ENCODE measurements at regions of chr10 and their contacts with region 1.

Region 1: DNA sequence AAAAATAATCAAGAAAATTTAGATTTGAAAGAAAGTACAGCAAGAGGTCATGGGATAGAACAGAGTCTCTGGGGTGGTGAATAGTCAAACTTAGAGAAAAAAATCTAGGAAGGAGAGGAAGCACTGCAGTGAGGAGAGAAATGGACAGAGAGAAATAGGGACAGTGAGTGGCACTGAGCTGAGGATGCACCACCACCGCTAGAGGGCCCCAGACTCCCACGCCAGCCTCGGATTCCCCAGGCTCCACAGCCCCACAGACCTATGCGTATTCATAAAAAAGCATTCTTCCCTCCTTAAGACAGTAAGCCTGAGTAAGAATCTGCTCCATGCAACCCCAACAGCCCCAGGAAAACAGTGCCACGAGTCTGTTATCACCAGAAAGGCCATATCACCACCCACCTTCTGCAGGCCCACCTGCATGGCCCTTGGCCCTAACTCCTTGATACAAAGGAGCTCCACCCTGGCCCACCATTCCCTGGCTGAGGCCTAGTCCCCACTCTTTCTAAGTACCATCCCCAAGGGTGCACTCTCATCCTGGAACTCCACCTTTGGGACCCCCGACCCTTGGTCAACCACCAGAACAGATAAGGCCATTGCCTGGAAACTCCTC is 91.0 kb downstream of the ALOX5 start:
- DNase-seq: peak; percentile 63
- H3K4me3 Mint-ChIP-seq: no peak overlapping the region
- H3K27ac Mint-ChIP-seq: no peak overlapping the region
- H3K4me1 Mint-ChIP-seq: peaks cover 55% of the 10 kb centered on the region
- H3K27me3 Mint-ChIP-seq: no peaks in the 10 kb centered on the region

Region 2: GRCh38 chr10:45052700-45053099 is 412.4 kb before region 1 on chr10:
- intact Hi-C with region 1: no loop called
- DNase-seq: no peak
- H3K4me3 Mint-ChIP-seq: no peak overlapping the region
- H3K27ac Mint-ChIP-seq: no peak overlapping the region
- H3K4me1 Mint-ChIP-seq: no peaks in the 10 kb centered on the region
- H3K27me3 Mint-ChIP-seq: peaks cover 8% of the 10 kb centered on the region

Region 3: GRCh38 chr10:45235798-45236231 is 229.2 kb before region 1 on chr10:
- intact Hi-C with region 1: loop called (anchors 1 kb)
- DNase-seq: no peak
- H3K4me3 Mint-ChIP-seq: no peak overlapping the region
- H3K27ac Mint-ChIP-seq: no peak overlapping the region
- H3K4me1 Mint-ChIP-seq: peaks cover 14% of the 10 kb centered on the region
- H3K27me3 Mint-ChIP-seq: peaks cover 2% of the 10 kb centered on the region

Region 4: DNA sequence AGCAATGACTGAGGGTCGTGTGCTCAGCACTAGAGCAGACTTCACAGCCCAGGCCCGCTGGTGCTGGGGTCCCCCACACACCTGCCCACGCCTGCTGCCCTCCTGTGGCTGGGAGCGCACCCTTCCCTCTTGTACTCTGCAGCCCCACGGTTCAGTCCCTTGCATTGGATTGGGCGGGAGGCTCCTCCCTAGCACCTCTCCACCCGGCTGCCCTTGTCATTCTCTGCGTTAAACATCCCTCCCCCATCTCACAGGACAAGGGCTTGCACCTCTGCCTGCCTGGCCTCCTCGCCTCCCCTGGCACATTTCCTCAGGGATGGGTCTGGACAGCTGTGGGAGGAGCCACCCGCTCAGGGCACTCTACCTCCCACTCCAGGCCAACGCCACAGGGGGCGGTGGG is 22.4 kb before region 1 on chr10:
- intact Hi-C with region 1: no loop called
- DNase-seq: no peak
- H3K4me3 Mint-ChIP-seq: no peak overlapping the region
- H3K27ac Mint-ChIP-seq: no peak overlapping the region
- H3K4me1 Mint-ChIP-seq: peaks cover 11% of the 10 kb centered on the region
- H3K27me3 Mint-ChIP-seq: peaks cover 7% of the 10 kb centered on the region

Region 5: GRCh38 chr10:45514291-45515270 is 49.5 kb after region 1 on chr10:
- intact Hi-C with region 1: loop called (anchors 5 kb)
- DNase-seq: no peak
- H3K4me3 Mint-ChIP-seq: no peak overlapping the region
- H3K27ac Mint-ChIP-seq: no peak overlapping the region
- H3K4me1 Mint-ChIP-seq: peaks cover 13% of the 10 kb centered on the region
- H3K27me3 Mint-ChIP-seq: no peaks in the 10 kb centered on the region

Region 6: GRCh38 chr10:45594276-45595106 is 129.4 kb after region 1 on chr10:
- intact Hi-C with region 1: loop called (anchors 1 kb)
- DNase-seq: peak; percentile 89
- H3K4me3 Mint-ChIP-seq: peak overlapping the region; percentile 90
- H3K27ac Mint-ChIP-seq: peak overlapping the region; percentile 81
- H3K4me1 Mint-ChIP-seq: peaks cover 40% of the 10 kb centered on the region
- H3K27me3 Mint-ChIP-seq: peaks cover 20% of the 10 kb centered on the region

Region 7: DNA sequence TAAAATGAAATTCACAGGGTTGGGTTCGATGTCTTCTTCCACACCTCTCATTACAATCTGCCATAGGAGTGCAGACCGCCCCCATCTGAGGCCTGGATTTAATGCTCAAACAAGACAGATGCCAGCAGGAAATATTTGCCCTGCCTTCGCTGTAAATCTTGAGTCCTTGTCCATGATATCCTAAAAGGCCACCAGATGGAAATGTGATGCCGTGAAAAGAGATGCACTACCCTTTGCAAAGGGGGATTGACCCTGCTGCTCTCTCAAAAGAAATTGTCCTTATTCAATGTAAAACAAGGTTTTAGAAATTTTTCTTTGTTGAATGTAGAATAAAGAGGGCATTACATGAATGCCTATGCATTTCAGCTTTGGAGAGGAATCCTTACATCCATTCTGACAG is 344.8 kb after region 1 on chr10:
- intact Hi-C with region 1: loop called (anchors 10 kb)
- DNase-seq: no peak
- H3K4me3 Mint-ChIP-seq: no peak overlapping the region
- H3K27ac Mint-ChIP-seq: no peak overlapping the region
- H3K4me1 Mint-ChIP-seq: no peaks in the 10 kb centered on the region
- H3K27me3 Mint-ChIP-seq: peaks cover 2% of the 10 kb centered on the region